Heart right ventricle (tissue), 16 donors: ENCODE measurements at regions of chr7 and their contacts with region 1.

Region 1: GRCh38 chr7:131625817-131626372 is 69.5 kb upstream of the PODXL start:
- DNase-seq: peak; percentile 53 to 73
- ATAC-seq: peak; percentile 23 to 64 (median 44)
- H3K4me3 ChIP-seq: no peak overlapping the region
- H3K27ac ChIP-seq: peak overlapping the region in 9 of 10 donors; percentile 56 to 87 (median 68)
- H3K4me1 ChIP-seq: peaks cover 38 to 100% (median 77%) of the 10 kb centered on the region in 9 donors
- H3K27me3 ChIP-seq: no peaks in the 10 kb centered on the region
- CTCF ChIP-seq: peak in 3 of 9 donors; percentile 7 to 17 (median 12)

Region 2: DNA sequence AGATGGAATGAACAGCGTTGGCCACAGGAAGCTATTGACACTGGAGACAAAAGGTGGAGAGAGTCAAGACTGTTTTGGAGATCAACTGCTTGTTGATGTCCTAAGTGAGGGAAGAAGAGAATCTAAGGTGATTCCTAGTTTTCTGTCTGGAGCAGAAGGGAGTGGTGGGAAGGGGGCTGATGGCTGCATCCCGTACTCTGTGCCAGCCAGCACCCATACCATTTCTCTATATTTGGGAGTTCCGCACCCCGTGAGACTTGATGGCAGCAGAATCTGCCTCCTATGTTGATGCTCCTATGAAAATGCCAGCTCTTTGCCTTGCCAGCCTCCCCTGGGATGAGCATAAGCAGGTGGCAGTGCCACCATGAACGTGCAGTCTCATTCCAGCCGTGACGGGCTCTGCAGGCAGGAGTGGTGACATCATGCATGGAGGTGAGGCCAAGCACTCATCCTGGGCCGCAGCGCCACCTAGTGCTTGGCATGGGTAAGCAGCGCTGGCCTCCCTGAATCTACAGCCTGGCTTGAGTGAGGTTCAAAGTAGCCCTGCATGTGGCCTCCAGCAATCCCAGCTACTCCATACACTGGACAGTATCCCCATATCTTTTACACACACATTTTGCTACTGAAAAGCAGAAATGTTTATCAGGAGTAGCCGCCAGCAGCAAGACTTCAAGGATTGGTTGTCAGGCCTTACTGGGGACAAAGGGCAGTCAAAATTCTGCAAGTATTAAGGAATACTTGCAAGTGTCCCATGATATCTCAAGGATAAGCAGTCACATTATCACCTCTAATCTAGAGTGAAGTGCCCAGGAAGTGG is 112.4 kb before region 1 on chr7:
- intact Hi-C with region 1: loop called in 2 of 10 experiments (anchors 1 to 10 kb)
- DNase-seq: peak; percentile 85 to 86
- ATAC-seq: peak; percentile 85 to 93 (median 91)
- H3K4me3 ChIP-seq: no peak overlapping the region
- H3K27ac ChIP-seq: peak overlapping the region in 9 of 10 donors; percentile 3 to 82 (median 50)
- H3K4me1 ChIP-seq: peaks cover 13 to 81% (median 46%) of the 10 kb centered on the region in 9 donors
- H3K27me3 ChIP-seq: no peaks in the 10 kb centered on the region
- CTCF ChIP-seq: peak; percentile 85 to 99 (median 96)

Region 3: GRCh38 chr7:131546583-131547111 is 79.2 kb before region 1 on chr7:
- intact Hi-C with region 1: loop called in 1 of 10 experiments (anchors 5 kb)
- DNase-seq: no peak
- ATAC-seq: peak in 1 of 8 donors; percentile 12
- H3K4me3 ChIP-seq: no peak overlapping the region
- H3K27ac ChIP-seq: peak overlapping the region in 5 of 10 donors; percentile 21 to 92 (median 83)
- H3K4me1 ChIP-seq: peaks cover 9 to 97% (median 53%) of the 10 kb centered on the region in 9 donors
- H3K27me3 ChIP-seq: no peaks in the 10 kb centered on the region
- CTCF ChIP-seq: peak; percentile 18 to 74 (median 63)

Region 4: GRCh38 chr7:131581241-131582051 is 44.4 kb before region 1 on chr7:
- intact Hi-C with region 1: loop called in 3 of 10 experiments (anchors 1 to 5 kb)
- DNase-seq: peak; percentile 83 to 84
- ATAC-seq: peak; percentile 78 to 94 (median 91)
- H3K4me3 ChIP-seq: no peak overlapping the region
- H3K27ac ChIP-seq: peak overlapping the region; percentile 68 to 91 (median 86)
- H3K4me1 ChIP-seq: peaks cover 4 to 38% (median 28%) of the 10 kb centered on the region in 9 donors
- H3K27me3 ChIP-seq: no peaks in the 10 kb centered on the region
- CTCF ChIP-seq: peak in 8 of 9 donors; percentile 4 to 48 (median 24)

Region 5: GRCh38 chr7:131753620-131754222 is 127.8 kb after region 1 on chr7:
- intact Hi-C with region 1: no loop called
- DNase-seq: no peak
- ATAC-seq: no peak
- H3K4me3 ChIP-seq: no peak overlapping the region
- H3K27ac ChIP-seq: no peak overlapping the region
- H3K4me1 ChIP-seq: no peaks in the 10 kb centered on the region
- H3K27me3 ChIP-seq: peaks cover 0 to 42% (median 13%) of the 10 kb centered on the region in 7 donors
- CTCF ChIP-seq: peak in 4 of 9 donors; percentile 8 to 28 (median 20)